ENCODE measurements at regions of chr20 and their contacts with region 1.

Region 1: DNA sequence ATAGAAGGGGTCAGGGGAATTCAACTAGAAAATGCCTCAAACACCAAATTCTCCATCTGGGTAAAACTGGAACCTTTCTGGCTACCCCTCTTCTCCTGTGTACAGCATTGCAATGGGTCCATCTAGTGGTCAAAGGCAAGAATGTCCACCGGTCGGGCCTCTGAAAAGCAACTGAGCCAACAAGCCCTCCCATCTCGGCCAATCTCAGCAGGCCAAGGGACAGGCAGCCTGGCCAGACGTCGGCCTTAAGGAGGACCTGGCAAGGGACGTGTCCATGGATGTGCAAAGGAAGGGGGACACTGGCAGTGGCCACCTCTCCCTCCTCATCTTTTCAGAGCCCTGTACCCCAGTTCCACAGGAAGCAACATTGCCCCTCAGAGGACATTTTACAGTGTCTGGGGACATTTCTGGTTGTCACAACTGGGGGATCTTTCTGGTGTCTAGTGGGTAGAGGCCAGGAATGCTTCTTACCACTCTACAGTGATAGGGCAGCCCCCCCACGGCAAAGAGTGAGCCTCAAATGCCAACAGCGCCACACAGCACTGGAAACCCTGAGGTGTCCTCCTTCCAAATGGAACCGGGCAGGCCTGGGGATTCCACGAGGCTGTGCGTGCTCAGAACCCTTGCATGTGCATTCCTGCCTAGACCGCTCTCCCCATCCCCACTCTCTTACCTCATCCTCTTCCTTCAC is 99.8 kb upstream of the FOXA2 start:
- DNase-seq: peak; percentile 67
- ATAC-seq: peak; percentile 92
- H3K4me3 ChIP-seq: no peak overlapping the region
- H3K27ac ChIP-seq: no peak overlapping the region
- H3K4me1 ChIP-seq: no peaks in the 10 kb centered on the region
- H3K27me3 ChIP-seq: no peaks in the 10 kb centered on the region
- CTCF ChIP-seq: peak; percentile 91
- POLR2A ChIP-seq: no peak
- RAD21 ChIP-seq: peak; percentile 86

Region 2: GRCh38 chr20:21719592-21720214 is 964.5 kb before region 1 on chr20:
- CTCF ChIA-PET with region 1: no interaction called
- POLR2A ChIA-PET with region 1: no interaction called
- dilution Hi-C with region 1: no loop called
- in situ Hi-C with region 1: no loop called
- intact Hi-C with region 1: loop called (anchors 5 kb)
- DNase-seq: peak; percentile 47
- ATAC-seq: 0 out of 2 replicates have a peak, but pooled peaks have one; percentile 44
- H3K4me3 ChIP-seq: no peak overlapping the region
- H3K27ac ChIP-seq: no peak overlapping the region
- H3K4me1 ChIP-seq: no peaks in the 10 kb centered on the region
- H3K27me3 ChIP-seq: peaks cover 9% of the 10 kb centered on the region; the same call in 1 of the 2 replicates
- CTCF ChIP-seq: peak; percentile 62
- POLR2A ChIP-seq: no peak
- RAD21 ChIP-seq: peak; percentile 26; the same call in 1 of the 2 replicates

Region 3: GRCh38 chr20:22333885-22334545 is 350.2 kb before region 1 on chr20:
- CTCF ChIA-PET with region 1: interaction called, 6 read pairs
- POLR2A ChIA-PET with region 1: no interaction called
- dilution Hi-C with region 1: no loop called
- in situ Hi-C with region 1: loop called (anchors 5 kb)
- intact Hi-C with region 1: loop called (anchors 1 kb)
- DNase-seq: peak; percentile 47
- ATAC-seq: peak; percentile 99
- H3K4me3 ChIP-seq: no peak overlapping the region
- H3K27ac ChIP-seq: no peak overlapping the region
- H3K4me1 ChIP-seq: no peaks in the 10 kb centered on the region
- H3K27me3 ChIP-seq: no peaks in the 10 kb centered on the region
- CTCF ChIP-seq: peak; percentile 68
- POLR2A ChIP-seq: no peak
- RAD21 ChIP-seq: peak; percentile 37; the same call in 1 of the 2 replicates

Region 4: DNA sequence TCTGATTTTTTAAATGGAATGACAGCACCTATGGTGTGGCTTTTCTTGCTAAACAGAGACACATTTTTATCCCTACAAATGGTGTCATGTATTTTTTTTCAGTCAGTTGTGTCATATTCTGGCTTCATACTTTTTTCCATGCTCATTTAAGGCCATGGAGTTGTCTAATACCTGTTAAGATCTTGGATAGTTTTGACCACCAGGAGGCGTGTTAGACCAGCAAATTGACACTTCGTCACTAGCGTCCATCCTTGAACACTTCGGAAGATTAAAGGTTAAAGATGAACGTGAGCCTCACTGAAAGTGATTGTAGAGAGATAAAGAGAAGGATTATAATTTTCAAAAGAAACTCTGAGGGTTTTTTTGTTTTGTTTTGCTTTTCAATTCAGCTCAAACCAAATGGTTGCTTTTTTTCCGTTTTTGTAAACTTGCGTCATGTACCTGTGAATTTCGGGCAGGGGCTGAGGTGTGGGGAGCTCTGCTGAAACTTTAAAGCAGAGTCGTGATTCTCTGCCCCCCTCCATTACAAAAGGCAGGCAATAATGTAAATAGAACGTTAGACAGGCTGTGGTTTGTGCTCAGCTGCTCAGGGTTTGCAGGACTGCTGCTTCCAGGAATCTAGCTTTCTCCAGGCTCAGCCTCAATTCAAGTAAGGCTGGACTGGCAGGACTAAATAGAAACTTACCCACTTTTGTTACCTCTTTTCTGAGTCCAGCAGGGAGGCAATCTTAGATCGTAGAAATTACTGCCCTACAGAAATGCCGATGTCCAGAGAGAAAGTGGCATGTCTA is 344.9 kb before region 1 on chr20:
- CTCF ChIA-PET with region 1: interaction called, 6 read pairs
- POLR2A ChIA-PET with region 1: no interaction called
- dilution Hi-C with region 1: loop called (anchors 10 kb)
- in situ Hi-C with region 1: loop called (anchors 5 kb)
- intact Hi-C with region 1: loop called (anchors 1 kb)
- DNase-seq: peak; percentile 63
- ATAC-seq: peak; percentile 74
- H3K4me3 ChIP-seq: no peak overlapping the region
- H3K27ac ChIP-seq: no peak overlapping the region
- H3K4me1 ChIP-seq: no peaks in the 10 kb centered on the region
- H3K27me3 ChIP-seq: no peaks in the 10 kb centered on the region
- CTCF ChIP-seq: peak; percentile 68
- POLR2A ChIP-seq: no peak
- RAD21 ChIP-seq: peak; percentile 70

Region 5: GRCh38 chr20:22346716-22347115 is 337.5 kb before region 1 on chr20:
- CTCF ChIA-PET with region 1: interaction called, 3 read pairs
- POLR2A ChIA-PET with region 1: no interaction called
- dilution Hi-C with region 1: loop called (anchors 10 kb)
- in situ Hi-C with region 1: no loop called
- intact Hi-C with region 1: no loop called
- DNase-seq: no peak
- ATAC-seq: no peak
- H3K4me3 ChIP-seq: no peak overlapping the region
- H3K27ac ChIP-seq: no peak overlapping the region
- H3K4me1 ChIP-seq: no peaks in the 10 kb centered on the region
- H3K27me3 ChIP-seq: no peaks in the 10 kb centered on the region
- CTCF ChIP-seq: no peak
- POLR2A ChIP-seq: no peak
- RAD21 ChIP-seq: no peak

Region 6: DNA sequence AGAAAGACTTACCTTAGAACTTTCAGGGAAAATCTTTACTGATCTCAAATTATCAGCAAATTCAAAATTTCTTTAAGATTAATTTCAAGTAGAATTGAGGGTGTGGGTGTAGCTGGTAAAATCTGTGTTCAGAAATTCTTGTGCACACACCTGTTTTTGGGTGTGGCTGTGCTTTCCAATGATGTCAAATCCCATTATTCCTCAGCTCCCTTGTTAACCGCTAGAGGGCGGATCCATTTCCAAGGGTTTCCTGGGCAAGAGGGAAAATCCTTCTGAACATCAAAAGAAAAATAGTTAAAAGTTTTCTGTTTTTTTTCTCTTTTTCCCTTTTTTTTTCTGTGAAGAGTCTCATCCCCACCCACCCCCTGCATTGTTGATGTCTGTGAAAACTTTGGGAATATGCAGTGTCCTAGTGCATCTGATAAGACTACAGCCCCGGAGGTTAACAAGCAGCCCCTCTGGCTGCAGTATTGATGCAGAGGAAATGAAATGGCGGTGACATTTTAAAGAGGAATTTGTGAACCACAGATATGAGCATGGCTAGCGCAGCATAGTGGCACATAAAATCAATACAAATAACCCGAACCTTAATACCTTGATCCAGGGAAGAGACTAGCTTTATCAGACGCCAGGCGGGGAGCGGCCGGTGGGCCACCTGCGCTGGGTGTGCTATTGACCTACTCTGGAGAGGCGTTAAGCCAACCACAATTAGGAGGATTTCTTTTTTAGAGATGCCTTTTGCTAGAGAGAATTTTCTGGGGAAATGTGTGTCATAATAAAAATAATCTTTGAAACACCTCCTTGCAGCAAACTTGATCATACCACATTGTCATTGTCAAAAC is 230.8 kb before region 1 on chr20:
- CTCF ChIA-PET with region 1: interaction called, 3 read pairs
- POLR2A ChIA-PET with region 1: no interaction called
- dilution Hi-C with region 1: no loop called
- in situ Hi-C with region 1: no loop called
- intact Hi-C with region 1: loop called (anchors 1 kb)
- DNase-seq: no peak
- ATAC-seq: no peak
- H3K4me3 ChIP-seq: no peak overlapping the region
- H3K27ac ChIP-seq: no peak overlapping the region
- H3K4me1 ChIP-seq: no peaks in the 10 kb centered on the region
- H3K27me3 ChIP-seq: no peaks in the 10 kb centered on the region
- CTCF ChIP-seq: peak; percentile 42
- POLR2A ChIP-seq: no peak
- RAD21 ChIP-seq: no peak

Region 7: GRCh38 chr20:22795871-22796270 is 111.7 kb after region 1 on chr20:
- CTCF ChIA-PET with region 1: no interaction called
- POLR2A ChIA-PET with region 1: no interaction called
- dilution Hi-C with region 1: no loop called
- in situ Hi-C with region 1: no loop called
- intact Hi-C with region 1: no loop called
- DNase-seq: peak; percentile 99
- ATAC-seq: peak; percentile 92
- H3K4me3 ChIP-seq: no peak overlapping the region
- H3K27ac ChIP-seq: peak overlapping the region; percentile 88
- H3K4me1 ChIP-seq: peaks cover 10% of the 10 kb centered on the region
- H3K27me3 ChIP-seq: peaks cover 2% of the 10 kb centered on the region; the same call in 1 of the 2 replicates
- CTCF ChIP-seq: no peak
- POLR2A ChIP-seq: no peak
- RAD21 ChIP-seq: peak; percentile 6; the same call in 1 of the 2 replicates

Region 8: DNA sequence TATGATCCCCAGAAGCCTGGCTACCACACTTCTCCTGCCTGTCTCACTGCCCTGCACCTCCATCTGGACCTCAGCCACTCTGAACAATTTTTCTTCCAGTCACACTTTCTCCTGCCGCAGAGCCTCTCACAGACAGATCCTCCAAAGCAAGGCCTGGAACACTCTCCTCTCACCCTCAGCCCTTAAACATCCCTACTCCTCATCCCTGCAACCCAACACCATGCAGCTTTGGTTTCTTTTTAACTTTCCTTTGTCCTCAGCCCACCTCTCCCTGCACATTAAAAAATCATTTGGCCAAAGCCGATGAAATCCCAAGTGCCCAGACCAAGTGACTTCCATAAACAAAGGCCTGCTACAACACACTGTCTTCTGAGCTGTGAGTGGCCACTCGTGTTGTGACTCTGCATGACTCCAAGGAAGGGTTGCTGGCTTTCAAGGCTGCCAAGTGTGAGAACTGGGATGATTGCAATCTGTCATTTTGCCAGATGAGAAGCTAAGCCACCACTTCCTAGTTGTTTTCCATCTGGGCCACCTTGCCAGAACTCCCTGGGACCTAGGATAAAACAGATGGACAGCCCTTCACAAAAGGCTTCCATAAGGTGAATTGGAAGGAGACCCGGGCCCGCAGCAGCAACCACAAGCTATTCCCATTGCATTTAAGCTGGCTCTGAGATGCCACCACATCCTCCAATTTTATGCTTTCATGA is 206.5 kb after region 1 on chr20:
- CTCF ChIA-PET with region 1: no interaction called
- POLR2A ChIA-PET with region 1: no interaction called
- dilution Hi-C with region 1: no loop called
- in situ Hi-C with region 1: no loop called
- intact Hi-C with region 1: no loop called
- DNase-seq: no peak
- ATAC-seq: no peak
- H3K4me3 ChIP-seq: no peak overlapping the region
- H3K27ac ChIP-seq: no peak overlapping the region
- H3K4me1 ChIP-seq: no peaks in the 10 kb centered on the region
- H3K27me3 ChIP-seq: no peaks in the 10 kb centered on the region
- CTCF ChIP-seq: no peak
- POLR2A ChIP-seq: no peak
- RAD21 ChIP-seq: no peak

Measured in IMR-90 (cell line).